H1 (cell line): ENCODE measurements at regions of chr18 and their contacts with region 1.

Region 1: GRCh38 chr18:21955757-21956652 is 213.4 kb upstream of the GATA6 start:
- DNase-seq: peak in 1 of 2 experiments; percentile 87
- H3K4me3 ChIP-seq: no peak overlapping the region
- H3K27ac ChIP-seq: no peak overlapping the region
- H3K4me1 ChIP-seq: no peaks in the 10 kb centered on the region
- H3K27me3 ChIP-seq: no peaks in the 10 kb centered on the region
- CTCF ChIP-seq: peak; percentile 85 to 94 (median 92)
- EP300 ChIP-seq: no peak
- POLR2A ChIP-seq: no peak
- RAD21 ChIP-seq: peak; percentile 66 to 75

Region 2: GRCh38 chr18:21672521-21673267 is 283.3 kb before region 1 on chr18:
- CTCF ChIA-PET with region 1: no interaction called
- POLR2A ChIA-PET with region 1: no interaction called
- DNase-seq: no peak
- H3K4me3 ChIP-seq: no peak overlapping the region
- H3K27ac ChIP-seq: no peak overlapping the region
- H3K4me1 ChIP-seq: no peaks in the 10 kb centered on the region; a peak in 1 of 7 replicates
- H3K27me3 ChIP-seq: no peaks in the 10 kb centered on the region; a peak in 1 of 7 replicates
- CTCF ChIP-seq: no peak
- EP300 ChIP-seq: no peak
- POLR2A ChIP-seq: no peak
- RAD21 ChIP-seq: no peak

Region 3: DNA sequence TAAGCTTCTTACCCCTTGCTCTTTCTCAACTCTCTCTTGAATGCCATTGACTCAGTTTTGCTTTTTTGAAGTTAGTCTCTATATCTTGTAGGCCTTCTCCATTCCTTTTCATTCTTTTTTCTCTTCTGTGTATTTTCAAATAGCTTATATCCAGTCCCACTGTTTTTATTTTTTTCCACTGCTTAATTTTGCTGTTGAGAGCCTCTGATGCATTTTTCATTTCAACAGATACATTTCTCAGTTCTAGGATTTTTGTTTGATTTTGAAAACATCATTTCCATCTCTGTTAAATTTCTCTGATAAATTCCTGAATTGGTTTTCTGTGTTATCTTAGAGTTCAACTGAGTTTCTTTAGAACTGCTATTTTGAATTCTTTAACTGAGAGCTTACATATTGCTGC is 169.5 kb before region 1 on chr18:
- CTCF ChIA-PET with region 1: no interaction called
- POLR2A ChIA-PET with region 1: no interaction called
- DNase-seq: no peak
- H3K4me3 ChIP-seq: no peak overlapping the region
- H3K27ac ChIP-seq: no peak overlapping the region
- H3K4me1 ChIP-seq: no peaks in the 10 kb centered on the region
- H3K27me3 ChIP-seq: no peaks in the 10 kb centered on the region
- CTCF ChIP-seq: no peak
- EP300 ChIP-seq: no peak
- POLR2A ChIP-seq: no peak
- RAD21 ChIP-seq: no peak

Region 4: GRCh38 chr18:21853016-21853415 is 103.0 kb before region 1 on chr18:
- CTCF ChIA-PET with region 1: no interaction called
- POLR2A ChIA-PET with region 1: no interaction called
- DNase-seq: no peak
- H3K4me3 ChIP-seq: no peak overlapping the region
- H3K27ac ChIP-seq: no peak overlapping the region
- H3K4me1 ChIP-seq: no peaks in the 10 kb centered on the region
- H3K27me3 ChIP-seq: no peaks in the 10 kb centered on the region
- CTCF ChIP-seq: no peak
- EP300 ChIP-seq: no peak
- POLR2A ChIP-seq: no peak
- RAD21 ChIP-seq: no peak

Region 5: DNA sequence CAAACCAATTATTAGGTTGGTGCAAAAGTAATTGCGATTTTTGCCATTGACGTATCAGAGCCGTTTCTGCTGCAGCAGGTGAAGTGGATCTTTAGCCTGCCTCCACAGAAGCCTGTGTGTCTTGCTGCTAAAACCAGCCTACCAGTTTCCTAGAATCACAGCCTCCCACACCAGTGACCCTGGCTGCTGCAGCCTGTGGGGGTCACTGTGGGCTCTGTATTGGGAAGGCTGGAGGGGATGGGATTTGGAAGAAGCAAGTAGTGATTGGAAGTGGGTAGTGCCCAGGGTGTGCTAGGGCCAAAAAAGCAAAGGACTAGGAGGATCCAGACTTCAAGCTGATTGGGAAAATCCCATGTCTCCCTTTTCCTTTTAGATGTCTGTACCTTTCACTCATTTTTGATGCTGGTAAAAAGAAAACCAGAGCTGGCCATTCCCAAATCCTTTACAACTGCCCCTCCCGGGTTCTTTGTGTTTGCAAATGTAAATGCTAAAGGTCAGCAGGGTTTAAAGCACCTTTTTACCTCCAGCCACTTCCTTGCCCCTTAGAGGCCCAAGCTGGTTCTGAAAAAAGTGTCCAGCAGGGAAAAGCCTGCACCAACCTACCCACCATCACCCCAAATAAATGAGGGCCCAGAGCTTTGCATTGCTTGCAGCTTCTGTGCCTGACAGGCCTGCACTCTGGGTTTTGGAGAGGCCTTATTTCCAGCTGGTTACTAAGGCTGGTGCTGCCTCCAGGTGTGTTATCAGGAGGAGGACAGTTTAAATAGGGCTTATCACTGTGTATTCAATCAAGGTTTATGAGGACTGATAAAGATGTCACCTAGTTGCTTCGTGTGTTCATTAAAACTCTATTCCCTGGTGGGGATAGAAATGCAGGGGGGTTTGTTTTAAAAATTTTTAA is 43.4 kb before region 1 on chr18:
- CTCF ChIA-PET with region 1: interaction called, 13 read pairs
- POLR2A ChIA-PET with region 1: no interaction called
- DNase-seq: no peak
- H3K4me3 ChIP-seq: no peak overlapping the region
- H3K27ac ChIP-seq: no peak overlapping the region
- H3K4me1 ChIP-seq: no peaks in the 10 kb centered on the region
- H3K27me3 ChIP-seq: peaks cover 0 to 22% (median 16%) of the 10 kb centered on the region in 4 experiments; a peak in 6 of 7 replicates
- CTCF ChIP-seq: peak; percentile 41 to 50 (median 48)
- EP300 ChIP-seq: no peak
- POLR2A ChIP-seq: no peak
- RAD21 ChIP-seq: peak; percentile 61 to 72